Posterior vena cava (tissue), 2 donors: ENCODE measurements at regions of chr13 and their contacts with region 1.

Region 1: GRCh38 chr13:113629866-113630265 is 28.1 kb downstream of the ATP4B start:
- DNase-seq: peak; percentile 43

Region 2: DNA sequence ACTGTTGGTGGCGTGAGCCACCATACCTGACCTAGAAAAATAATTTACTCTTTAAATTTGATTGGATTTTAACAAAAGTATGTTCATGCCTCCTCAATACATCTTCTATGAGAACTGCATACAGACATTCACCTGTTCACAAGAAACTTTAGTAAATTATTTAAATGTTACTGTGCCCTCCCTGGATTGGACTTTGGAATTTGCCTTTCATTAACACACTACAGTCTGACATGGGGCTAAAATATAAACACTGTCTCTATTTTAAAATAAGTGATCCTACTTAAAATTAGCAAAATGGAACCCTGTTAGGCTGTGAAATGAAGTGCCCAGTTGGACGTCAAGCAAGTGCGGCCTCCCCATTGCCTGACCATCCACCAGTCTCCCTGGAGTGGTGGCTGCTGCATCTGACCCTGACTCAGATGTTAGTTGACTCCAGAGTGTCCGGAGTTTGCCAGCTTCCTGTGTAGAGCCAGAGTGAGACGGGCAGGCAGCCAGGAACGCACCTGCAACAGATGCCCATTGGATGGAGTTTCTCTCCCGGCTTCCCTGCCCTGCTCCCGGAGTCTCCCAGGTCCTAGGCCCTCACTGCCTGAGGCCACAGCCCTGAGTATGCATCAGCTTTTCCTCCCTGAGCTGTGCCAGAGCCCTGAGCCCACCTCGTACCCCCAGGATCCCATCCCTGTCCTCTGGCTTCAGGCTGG is 986.0 kb before region 1 on chr13:
- intact Hi-C with region 1: loop called in 1 of 2 experiments (anchors 5 kb)
- DNase-seq: no peak

Region 3: DNA sequence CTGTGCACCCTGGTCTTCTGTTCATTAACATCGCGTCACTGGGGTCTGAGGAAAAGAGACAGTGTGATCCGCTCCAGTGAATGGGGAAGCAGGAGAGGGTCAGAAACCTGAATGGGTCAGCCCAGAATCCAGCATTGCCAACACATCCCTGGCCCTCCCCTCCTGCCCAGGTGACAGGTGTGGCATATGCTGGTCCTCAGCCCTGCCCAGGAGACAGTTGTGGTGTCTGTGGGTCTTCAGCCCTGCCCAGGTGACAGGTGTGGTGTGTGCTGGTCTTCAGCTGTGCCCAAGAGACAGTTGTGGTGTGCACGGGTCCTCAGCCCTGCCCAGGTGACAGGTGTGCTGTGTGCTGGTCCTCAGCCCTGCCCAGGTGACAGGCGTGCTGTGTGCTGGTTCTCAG is 37.3 kb before region 1 on chr13:
- intact Hi-C with region 1: loop called in 1 of 2 experiments (anchors 2 kb)
- DNase-seq: peak; percentile 36